ENCODE measurements at regions of chr2 and their contacts with region 1.

Region 1: DNA sequence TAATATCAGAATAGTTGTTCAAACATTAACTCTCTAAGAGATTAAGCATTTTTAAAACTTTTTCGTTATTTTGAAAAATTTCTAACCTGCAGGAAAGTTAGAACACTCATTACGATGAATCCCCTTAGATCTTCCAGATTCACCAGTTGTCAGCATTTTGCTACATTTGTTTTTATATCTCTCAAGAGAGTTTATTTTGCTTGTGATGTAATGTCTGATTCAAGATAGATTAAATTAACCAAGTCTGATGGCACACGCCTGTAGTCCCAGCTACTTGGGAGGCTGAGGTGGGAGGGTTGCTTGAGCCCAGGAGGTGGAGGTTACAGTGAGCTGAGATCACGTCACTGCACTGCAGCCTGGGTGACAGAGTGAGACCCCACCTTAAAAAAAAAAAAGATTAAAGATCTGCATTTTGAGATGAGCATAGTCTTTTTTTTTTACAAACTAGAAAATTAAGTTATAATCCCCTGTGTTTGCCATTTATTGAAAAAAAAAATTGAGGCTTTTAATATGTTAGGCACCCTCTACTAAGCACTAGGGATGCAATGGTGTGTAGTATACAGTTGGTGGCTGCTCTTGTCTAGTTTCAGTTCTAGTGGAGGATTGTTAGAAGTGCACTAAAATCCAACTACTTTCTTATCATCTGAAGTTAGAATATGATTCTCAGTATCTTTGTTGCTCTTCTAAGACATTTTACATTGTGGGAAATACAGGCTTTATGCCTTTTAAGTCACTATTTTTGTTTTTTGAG is 20.9 kb downstream of the RAB10 start:
- DNase-seq: no peak
- H3K4me3 ChIP-seq: no peak overlapping the region
- CTCF ChIP-seq: no peak
- POLR2A ChIP-seq: no peak

Region 2: DNA sequence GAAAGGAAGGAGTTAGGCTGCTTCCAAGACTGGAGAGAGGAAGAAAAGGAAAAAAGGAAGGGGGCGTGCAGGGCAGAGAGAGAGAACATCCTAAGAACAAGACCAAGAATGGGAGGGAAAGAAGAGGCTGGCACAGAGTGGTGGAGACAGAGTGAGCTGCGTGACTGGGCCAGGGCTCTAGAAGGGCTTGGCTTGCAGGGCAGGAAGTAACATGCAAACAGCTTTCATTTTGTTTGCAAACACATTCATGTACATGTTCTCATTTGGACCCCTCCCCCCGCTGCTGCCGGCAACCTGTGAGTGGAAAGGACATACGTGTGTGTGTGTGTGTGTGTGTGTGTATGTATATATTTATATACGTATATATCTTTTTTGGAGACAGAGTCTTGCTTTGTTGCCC is 666.3 kb before region 1 on chr2:
- intact Hi-C with region 1: loop called (anchors 5 kb)
- DNase-seq: no peak
- H3K4me3 ChIP-seq: no peak overlapping the region
- CTCF ChIP-seq: no peak
- POLR2A ChIP-seq: no peak

Region 3: DNA sequence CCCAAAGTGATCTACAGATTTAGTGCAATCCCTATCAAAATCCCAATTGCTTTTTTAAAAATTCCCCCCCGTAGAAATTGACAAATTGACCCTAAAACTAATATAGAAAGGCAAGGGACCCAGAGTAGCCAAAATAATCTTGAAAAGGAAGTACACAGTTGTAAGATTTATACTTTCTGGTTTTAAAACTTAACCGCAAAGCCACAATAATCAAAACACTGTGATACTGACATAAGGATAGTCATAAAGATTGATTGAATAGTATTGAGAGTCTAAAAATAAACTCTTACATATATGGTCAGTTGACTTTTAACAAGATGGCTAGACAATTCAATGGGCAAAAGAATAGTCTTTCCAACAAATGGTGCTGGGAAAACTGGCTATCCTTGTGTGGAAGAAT is 59.4 kb after region 1 on chr2:
- intact Hi-C with region 1: no loop called
- DNase-seq: no peak
- H3K4me3 ChIP-seq: no peak overlapping the region
- CTCF ChIP-seq: no peak
- POLR2A ChIP-seq: no peak